HCT116 (cell line): ENCODE measurements at regions of chr20 and their contacts with region 1.

Region 1: GRCh38 chr20:50744143-50744792 is 12.9 kb downstream of the PARD6B start:
- DNase-seq: peak; percentile 67
- ATAC-seq: peak; percentile 75
- H3K4me3 ChIP-seq: peak overlapping the region; percentile 8 to 42; a peak in 3 of 4 replicates
- H3K27ac ChIP-seq: peak overlapping the region; percentile 93
- H3K4me1 ChIP-seq: peaks cover 80 to 91% of the 10 kb centered on the region in 2 experiments
- H3K27me3 ChIP-seq: no peaks in the 10 kb centered on the region
- CTCF ChIP-seq: peak; percentile 9 to 46 (median 24); a peak in 3 of 6 replicates
- POLR2A ChIP-seq: no peak
- RAD21 ChIP-seq: peak; percentile 72

Region 2: GRCh38 chr20:50625986-50626677 is 118.1 kb before region 1 on chr20:
- CTCF ChIA-PET with region 1: interaction called, 32 read pairs
- POLR2A ChIA-PET with region 1: interaction called, 3 read pairs
- RAD21 ChIA-PET with region 1: interaction called, 3 to 10 read pairs
- intact Hi-C with region 1: loop called (anchors 5 kb)
- DNase-seq: peak; percentile 36
- ATAC-seq: peak; percentile 91
- H3K4me3 ChIP-seq: 0 out of 4 replicates have a peak overlapping the region, but pooled peaks of 1 of the 2 experiments have one; percentile 7
- H3K27ac ChIP-seq: no peak overlapping the region
- H3K4me1 ChIP-seq: peaks cover 6 to 20% of the 10 kb centered on the region in 2 experiments; a peak in 3 of 4 replicates
- H3K27me3 ChIP-seq: no peaks in the 10 kb centered on the region
- CTCF ChIP-seq: peak; percentile 83 to 90 (median 85)
- POLR2A ChIP-seq: no peak
- RAD21 ChIP-seq: peak; percentile 98

Region 3: GRCh38 chr20:50635667-50636503 is 108.4 kb before region 1 on chr20:
- CTCF ChIA-PET with region 1: interaction called, 5 read pairs
- POLR2A ChIA-PET with region 1: no interaction called
- RAD21 ChIA-PET with region 1: no interaction called
- intact Hi-C with region 1: loop called (anchors 5 kb)
- DNase-seq: peak; percentile 67
- ATAC-seq: peak; percentile 87
- H3K4me3 ChIP-seq: peak overlapping the region; percentile 44 to 56
- H3K27ac ChIP-seq: peak overlapping the region; percentile 11; the same call in 1 of the 2 replicates
- H3K4me1 ChIP-seq: peaks cover 13 to 30% of the 10 kb centered on the region in 2 experiments
- H3K27me3 ChIP-seq: no peaks in the 10 kb centered on the region
- CTCF ChIP-seq: peak; percentile 75 to 99 (median 99); a peak in 5 of 6 replicates
- POLR2A ChIP-seq: no peak
- RAD21 ChIP-seq: peak; percentile 64

Region 4: DNA sequence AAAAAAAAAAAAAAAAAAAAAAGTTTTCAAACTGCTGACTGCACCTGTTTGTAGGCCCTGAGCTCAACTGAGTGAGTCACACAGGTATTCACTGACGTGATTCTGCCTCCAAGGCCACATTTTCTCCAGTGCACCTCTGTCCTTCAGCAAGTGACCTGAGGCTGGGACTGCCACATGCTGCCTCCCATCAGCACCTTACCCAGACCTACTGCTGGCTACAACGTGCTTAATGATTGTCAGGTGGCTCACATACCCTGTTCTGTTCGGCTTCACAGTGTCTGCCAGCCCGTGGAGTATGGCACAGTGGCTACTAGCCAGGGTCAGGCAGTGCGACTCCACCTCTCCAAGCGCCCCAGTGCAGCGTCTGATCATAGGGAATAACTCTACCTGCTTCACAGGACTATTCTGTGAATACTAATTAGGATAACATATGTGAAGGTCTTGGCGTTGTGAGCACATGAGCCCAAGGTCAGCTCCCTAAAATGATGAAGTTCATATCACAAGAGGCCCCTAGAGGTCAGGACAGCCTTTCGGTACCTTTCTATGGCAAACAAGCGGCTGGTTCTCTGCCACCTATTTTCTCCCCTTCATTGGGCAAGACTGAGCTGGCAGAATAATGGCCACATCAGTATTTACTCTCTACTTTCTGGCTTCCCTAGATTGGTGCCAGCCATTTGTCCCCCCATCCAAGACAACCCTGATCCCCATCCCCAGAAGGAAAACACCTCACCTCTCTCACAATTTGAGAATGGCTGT is 81.0 kb before region 1 on chr20:
- CTCF ChIA-PET with region 1: interaction called, 19 read pairs
- POLR2A ChIA-PET with region 1: interaction called, 7 read pairs
- RAD21 ChIA-PET with region 1: interaction called in 1 of 2 experiments, 7 read pairs
- intact Hi-C with region 1: loop called (anchors 2 kb)
- DNase-seq: peak; percentile 36
- ATAC-seq: peak; percentile 75
- H3K4me3 ChIP-seq: no peak overlapping the region
- H3K27ac ChIP-seq: no peak overlapping the region
- H3K4me1 ChIP-seq: peaks cover 26 to 43% of the 10 kb centered on the region in 2 experiments; a peak in 3 of 4 replicates
- H3K27me3 ChIP-seq: no peaks in the 10 kb centered on the region
- CTCF ChIP-seq: peak; percentile 34 to 62 (median 50); a peak in 4 of 6 replicates
- POLR2A ChIP-seq: no peak
- RAD21 ChIP-seq: peak; percentile 80